ENCODE measurements at regions of chr5 and their contacts with region 1.

Region 1: DNA sequence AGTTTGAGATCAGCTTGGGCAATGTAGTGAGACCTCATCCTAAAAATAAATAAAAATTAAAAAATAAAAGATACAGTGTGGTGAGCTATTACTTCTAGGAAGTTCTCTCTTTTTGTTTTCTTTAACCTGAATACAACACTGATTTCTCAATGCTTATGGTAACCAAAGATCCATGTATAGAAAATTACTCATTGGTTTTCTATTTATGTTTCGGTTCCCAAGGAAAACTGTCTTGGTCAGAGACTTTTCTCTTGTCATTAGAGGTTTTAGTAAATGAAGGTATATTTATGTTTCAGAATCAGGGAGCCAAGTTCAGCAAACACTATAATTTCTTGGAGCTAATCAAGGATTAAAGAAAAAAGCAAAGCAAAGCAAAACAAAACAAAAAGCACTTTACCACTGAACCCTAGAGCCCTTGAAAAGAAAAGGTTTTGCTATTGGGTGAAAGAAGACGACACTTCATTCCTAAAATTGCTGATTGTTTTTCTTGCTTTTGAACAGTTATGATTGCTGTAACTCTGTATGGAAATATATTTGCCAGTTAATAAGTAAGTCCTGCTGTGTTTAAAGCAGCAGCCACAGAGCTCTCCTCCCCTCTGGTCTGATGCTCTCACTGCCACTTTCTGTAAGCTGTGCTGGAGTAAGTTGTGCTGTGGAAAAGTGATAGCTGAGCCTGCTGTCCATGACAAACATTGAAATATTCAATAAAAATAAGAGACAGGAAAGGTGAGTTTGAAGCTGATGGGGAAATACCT is 298.2 kb downstream of the CD180 start:
- DNase-seq: no peak
- ATAC-seq: no peak
- H3K4me3 ChIP-seq: no peak overlapping the region
- H3K27ac ChIP-seq: no peak overlapping the region
- H3K4me1 ChIP-seq: peaks cover 5% of the 10 kb centered on the region; the same call in 1 of the 2 replicates
- H3K27me3 ChIP-seq: no peaks in the 10 kb centered on the region
- CTCF ChIP-seq: no peak

Region 2: GRCh38 chr5:66643387-66643786 is 255.0 kb before region 1 on chr5:
- CTCF ChIA-PET with region 1: no interaction called
- POLR2A ChIA-PET with region 1: no interaction called
- intact Hi-C with region 1: no loop called
- DNase-seq: no peak
- ATAC-seq: no peak
- H3K4me3 ChIP-seq: no peak overlapping the region
- H3K27ac ChIP-seq: no peak overlapping the region
- H3K4me1 ChIP-seq: no peaks in the 10 kb centered on the region
- H3K27me3 ChIP-seq: no peaks in the 10 kb centered on the region
- CTCF ChIP-seq: no peak

Region 3: DNA sequence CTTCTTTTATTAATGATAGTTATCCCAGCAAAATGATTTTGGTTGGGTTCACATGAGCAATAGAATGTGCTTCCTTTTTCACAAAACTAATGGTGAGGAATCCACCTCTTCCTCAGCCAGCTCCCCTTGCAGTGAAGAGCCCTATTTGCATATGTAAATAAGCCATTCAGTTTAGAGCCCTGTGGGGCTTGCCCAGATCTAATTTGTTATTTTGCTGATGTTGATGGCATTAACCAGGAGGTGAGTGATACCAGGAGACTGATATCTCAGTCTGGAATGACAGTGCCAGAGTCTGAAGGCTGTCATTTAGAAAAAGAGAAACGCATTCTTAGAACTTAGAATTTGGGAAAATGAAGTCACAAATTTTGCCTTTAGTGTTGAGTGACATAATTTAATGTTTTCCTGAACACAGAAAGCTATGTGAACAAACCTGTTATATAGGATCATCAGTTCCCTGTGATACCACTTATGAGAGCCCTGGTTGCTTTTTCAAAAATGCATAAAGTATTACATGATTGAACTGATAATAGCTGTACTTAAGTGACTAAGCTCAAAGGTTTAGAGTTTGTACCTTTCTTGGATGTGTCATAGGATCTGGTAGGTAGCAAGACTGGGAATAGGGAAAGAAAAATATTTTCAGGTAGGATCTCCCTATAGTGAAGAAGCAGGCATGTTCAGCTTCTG is 30.6 kb before region 1 on chr5:
- CTCF ChIA-PET with region 1: no interaction called
- POLR2A ChIA-PET with region 1: no interaction called
- intact Hi-C with region 1: no loop called
- DNase-seq: no peak
- ATAC-seq: no peak
- H3K4me3 ChIP-seq: no peak overlapping the region
- H3K27ac ChIP-seq: no peak overlapping the region
- H3K4me1 ChIP-seq: no peaks in the 10 kb centered on the region
- H3K27me3 ChIP-seq: no peaks in the 10 kb centered on the region
- CTCF ChIP-seq: no peak

Region 4: GRCh38 chr5:66931651-66932050 is 33.2 kb after region 1 on chr5:
- CTCF ChIA-PET with region 1: no interaction called
- POLR2A ChIA-PET with region 1: no interaction called
- intact Hi-C with region 1: loop called (anchors 2 kb)
- DNase-seq: no peak
- ATAC-seq: no peak
- H3K4me3 ChIP-seq: no peak overlapping the region
- H3K27ac ChIP-seq: no peak overlapping the region
- H3K4me1 ChIP-seq: peaks cover 8% of the 10 kb centered on the region
- H3K27me3 ChIP-seq: no peaks in the 10 kb centered on the region
- CTCF ChIP-seq: no peak

Measured in PC-3 (cell line).